CD4-positive, alpha-beta memory T cell (primary cell): ENCODE measurements at regions of chr16 and their contacts with region 1.

Region 1: DNA sequence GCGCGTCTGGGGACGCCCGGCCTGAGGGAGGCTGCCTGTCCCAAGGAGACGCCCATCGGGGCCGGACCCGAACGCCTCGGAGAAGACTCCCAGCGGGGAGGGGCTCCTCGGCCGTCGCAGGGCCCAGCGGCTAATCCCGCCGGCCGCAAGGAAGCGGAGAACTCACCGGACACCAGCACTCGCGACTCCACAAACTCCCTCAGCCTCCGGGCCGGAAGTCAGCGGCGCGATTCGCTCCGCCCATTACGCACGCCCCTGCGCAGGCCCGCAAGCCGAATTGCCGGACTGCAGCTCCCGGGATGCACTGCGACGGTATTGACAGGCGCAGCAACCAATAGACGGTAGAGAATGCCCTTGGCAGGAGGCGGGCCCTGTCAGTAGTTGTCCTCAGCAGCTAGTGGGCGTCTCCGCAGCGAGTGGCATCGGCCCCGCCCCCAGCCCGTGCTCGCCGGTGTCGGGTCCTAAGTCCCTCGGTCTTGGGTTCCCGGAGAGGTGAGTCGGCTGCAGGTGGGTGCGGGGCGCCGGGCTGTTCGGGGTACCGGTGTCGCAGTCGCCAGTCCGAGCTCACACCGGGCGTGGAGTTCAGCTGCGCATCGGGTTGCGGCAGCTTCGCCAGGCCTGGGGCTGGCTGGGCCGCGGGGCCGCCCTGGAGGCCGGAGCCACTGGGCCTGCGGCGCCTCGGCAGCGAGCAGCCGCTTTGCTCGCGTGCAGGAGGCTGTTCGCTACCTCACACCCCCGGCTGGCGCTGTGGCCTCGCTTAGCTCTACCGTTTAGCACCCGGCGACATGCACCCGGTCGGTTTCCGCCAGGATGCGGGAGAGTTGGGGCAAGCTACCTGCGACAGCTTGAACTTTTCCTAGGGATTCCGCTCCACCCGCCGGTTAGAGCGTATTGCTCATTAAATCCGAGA is at the starts of genes ZNF174 and ZSCAN32:
- DNase-seq: peak; percentile 98 to 99 (median 99)
- H3K4me3 ChIP-seq: peak within 1 kb of the TSS; percentile 72 to 79
- H3K4me3 Mint-ChIP-seq: peak within 1 kb of the TSS; percentile 90 to 98 (median 94)
- H3K27ac ChIP-seq: peak within 1 kb of the TSS; percentile 69
- H3K27ac Mint-ChIP-seq: peak within 1 kb of the TSS; percentile 85 to 95 (median 90)
- H3K4me1 ChIP-seq: peaks cover 34% of the 10 kb centered on the region
- H3K4me1 Mint-ChIP-seq: peaks cover 36 to 68% (median 52%) of the 10 kb centered on the region in 4 donors
- H3K27me3 ChIP-seq: no peaks in the 10 kb centered on the region
- H3K27me3 Mint-ChIP-seq: no peaks in the 10 kb centered on the region
- total RNA-seq, gene ZNF174: 17.9 to 18.0 TPM
- total RNA-seq, gene ZSCAN32: 26.8 to 28.8 TPM

Region 2: DNA sequence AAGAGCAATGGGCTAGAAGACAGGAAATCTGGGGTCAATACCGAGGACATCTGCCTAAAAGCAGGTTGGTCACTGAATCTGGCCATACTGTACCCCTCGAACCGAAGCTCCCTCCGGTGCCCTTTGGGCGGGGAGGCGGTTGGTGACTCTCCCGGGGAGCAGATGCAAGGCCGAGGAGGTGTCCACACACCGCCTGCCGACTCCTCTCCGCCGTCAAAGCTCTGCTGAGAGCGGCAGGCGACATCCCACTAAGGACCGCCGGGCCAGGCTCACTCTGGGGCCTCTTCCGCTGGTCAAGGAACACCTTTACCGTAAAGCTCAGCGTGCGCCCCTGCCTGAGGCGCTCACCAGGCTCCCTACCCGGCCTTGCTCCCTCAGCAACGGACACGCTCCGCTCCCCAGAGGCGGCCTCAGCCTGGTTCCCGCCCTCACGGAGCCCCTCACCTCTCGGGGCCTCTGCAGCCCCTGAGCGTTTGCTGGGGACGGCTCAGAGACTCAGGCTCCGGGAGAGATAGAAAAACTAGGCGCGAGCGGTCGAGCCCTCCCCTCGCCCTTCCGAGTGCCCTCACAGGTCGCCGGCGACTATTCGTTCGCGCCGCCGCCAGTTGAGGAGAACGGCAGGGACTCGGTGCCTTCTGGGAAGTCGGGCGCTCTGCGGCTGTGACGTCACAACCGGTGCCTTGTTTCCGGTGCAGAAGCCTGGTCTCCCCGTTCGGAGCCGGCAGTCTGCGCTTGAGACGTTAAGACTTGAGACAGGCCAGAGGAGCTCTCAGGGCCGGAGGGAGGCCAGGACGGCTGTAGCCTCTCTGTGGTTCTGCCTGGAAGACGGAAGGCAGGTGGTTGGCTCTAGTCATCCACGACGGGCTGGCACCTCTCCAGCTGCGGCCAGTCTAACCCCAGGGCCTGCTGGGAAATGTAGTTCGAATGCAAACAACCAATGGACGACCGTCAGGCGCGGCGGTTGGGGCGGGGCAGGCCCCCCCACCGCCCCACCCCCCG is 166.2 kb before region 1 on chr16 and contains the start of gene ZNF200:
- CTCF ChIA-PET with region 1: interaction called, 3 read pairs
- POLR2A ChIA-PET with region 1: interaction called, 20 read pairs
- intact Hi-C with region 1: loop called (anchors 1 kb)
- DNase-seq: peak; percentile 92 to 96 (median 95)
- H3K4me3 ChIP-seq: peak within 1 kb of the TSS; percentile 91 to 94
- H3K4me3 Mint-ChIP-seq: peak within 1 kb of the TSS; percentile 93 to 98 (median 96)
- H3K27ac ChIP-seq: peak within 1 kb of the TSS; percentile 88
- H3K27ac Mint-ChIP-seq: peak within 1 kb of the TSS; percentile 96 to 99 (median 98)
- H3K4me1 ChIP-seq: peaks cover 29% of the 10 kb centered on the region
- H3K4me1 Mint-ChIP-seq: peaks cover 17 to 41% (median 23%) of the 10 kb centered on the region in 4 donors
- H3K27me3 ChIP-seq: no peaks in the 10 kb centered on the region
- H3K27me3 Mint-ChIP-seq: no peaks in the 10 kb centered on the region
- total RNA-seq, gene ZNF200: 27.7 to 29.2 TPM

Region 3: GRCh38 chr16:3364774-3365427 is 36.1 kb before region 1 on chr16:
- CTCF ChIA-PET with region 1: interaction called, 3 read pairs
- POLR2A ChIA-PET with region 1: interaction called, 19 read pairs
- intact Hi-C with region 1: no loop called
- DNase-seq: peak; percentile 81 to 90 (median 88)
- H3K4me3 ChIP-seq: peak overlapping the region in 1 of 2 donors; percentile 46
- H3K4me3 Mint-ChIP-seq: peak overlapping the region; percentile 78 to 88 (median 84)
- H3K27ac ChIP-seq: peak overlapping the region; percentile 59
- H3K27ac Mint-ChIP-seq: peak overlapping the region; percentile 71 to 95 (median 90)
- H3K4me1 ChIP-seq: peaks cover 5% of the 10 kb centered on the region
- H3K4me1 Mint-ChIP-seq: peaks cover 3 to 20% (median 7%) of the 10 kb centered on the region in 4 donors
- H3K27me3 ChIP-seq: no peaks in the 10 kb centered on the region
- H3K27me3 Mint-ChIP-seq: peaks cover 11 to 19% of the 10 kb centered on the region in 2 donors

Region 4: GRCh38 chr16:3443108-3444031 is 42.3 kb after region 1 on chr16 and contains the starts of genes NAA60 and ZNF597:
- CTCF ChIA-PET with region 1: interaction called, 5 read pairs
- POLR2A ChIA-PET with region 1: interaction called, 17 read pairs
- intact Hi-C with region 1: loop called (anchors 2 kb)
- DNase-seq: peak; percentile 80 to 88 (median 82)
- H3K4me3 ChIP-seq: peak within 1 kb of the TSS; percentile 66 to 67
- H3K4me3 Mint-ChIP-seq: peak within 1 kb of the TSS; percentile 96 to 99 (median 96)
- H3K27ac ChIP-seq: peak within 1 kb of the TSS; percentile 80
- H3K27ac Mint-ChIP-seq: peak within 1 kb of the TSS; percentile 88 to 99 (median 97)
- H3K4me1 ChIP-seq: peaks cover 24% of the 10 kb centered on the region
- H3K4me1 Mint-ChIP-seq: peaks cover 8 to 39% (median 23%) of the 10 kb centered on the region in 4 donors
- H3K27me3 ChIP-seq: no peaks in the 10 kb centered on the region
- H3K27me3 Mint-ChIP-seq: no peaks in the 10 kb centered on the region
- total RNA-seq, gene NAA60: 58.1 to 62.9 TPM
- total RNA-seq, gene ZNF597: 5.3 TPM

Region 5: DNA sequence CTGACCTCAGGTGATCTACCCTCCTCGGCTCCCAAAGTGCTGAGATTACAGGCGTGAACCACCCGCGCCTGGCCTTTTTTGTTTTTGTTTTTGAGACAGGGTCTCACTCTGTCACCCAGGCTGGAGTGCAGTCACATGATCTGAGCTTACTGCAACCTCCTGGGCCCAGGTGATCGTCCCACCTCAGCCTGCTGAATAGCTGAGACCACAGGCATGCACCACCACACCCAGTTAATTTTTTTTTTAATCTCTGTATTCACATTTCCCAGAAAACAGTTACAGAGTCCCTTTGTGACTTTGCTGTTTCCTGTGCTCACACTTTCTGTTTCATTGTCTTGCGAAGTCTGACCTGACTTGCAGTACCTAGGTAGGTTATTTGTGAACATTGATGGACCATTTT is 102.5 kb after region 1 on chr16:
- CTCF ChIA-PET with region 1: interaction called, 3 read pairs
- POLR2A ChIA-PET with region 1: interaction called, 8 read pairs
- intact Hi-C with region 1: loop called (anchors 2 kb)
- DNase-seq: peak; percentile 61 to 76 (median 67)
- H3K4me3 ChIP-seq: peak overlapping the region in 1 of 2 donors; percentile 12
- H3K4me3 Mint-ChIP-seq: peak overlapping the region; percentile 68 to 84 (median 79)
- H3K27ac ChIP-seq: peak overlapping the region; percentile 4
- H3K27ac Mint-ChIP-seq: peak overlapping the region; percentile 88 to 95 (median 93)
- H3K4me1 ChIP-seq: peaks cover 65% of the 10 kb centered on the region
- H3K4me1 Mint-ChIP-seq: peaks cover 45 to 74% (median 55%) of the 10 kb centered on the region in 4 donors
- H3K27me3 ChIP-seq: no peaks in the 10 kb centered on the region
- H3K27me3 Mint-ChIP-seq: no peaks in the 10 kb centered on the region